PC-3 (cell line): ENCODE measurements at regions of chr2 and their contacts with region 1.

Region 1: GRCh38 chr2:172084734-172085459 is 410 bp upstream of the DLX1 start:
- DNase-seq: peak; percentile 96
- ATAC-seq: peak; percentile 90
- H3K4me3 ChIP-seq: peak overlapping the region; percentile 94
- H3K27ac ChIP-seq: peak overlapping the region; percentile 60
- H3K4me1 ChIP-seq: peaks cover 16% of the 10 kb centered on the region; the same call in 1 of the 2 replicates
- H3K27me3 ChIP-seq: no peaks in the 10 kb centered on the region
- CTCF ChIP-seq: no peak

Region 2: DNA sequence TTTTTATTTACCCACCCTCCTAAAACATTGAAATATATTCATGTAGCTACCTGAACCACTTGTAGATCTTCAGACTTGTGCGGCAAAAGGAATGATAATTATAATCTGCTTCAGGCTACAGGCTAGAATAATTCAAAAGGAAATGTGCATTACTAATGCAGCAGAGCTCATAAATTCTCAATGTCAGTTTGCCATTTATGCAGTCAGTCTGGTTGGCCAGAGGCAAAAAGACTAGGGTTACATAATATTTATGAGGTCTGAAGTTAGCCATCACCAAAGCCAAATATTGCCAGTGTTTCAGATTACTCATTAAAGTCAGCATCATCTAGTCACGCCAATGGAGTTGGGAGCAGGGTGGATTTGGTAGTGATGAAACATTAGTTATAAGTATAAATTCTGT is 46.3 kb before region 1 on chr2:
- CTCF ChIA-PET with region 1: no interaction called
- POLR2A ChIA-PET with region 1: no interaction called
- intact Hi-C with region 1: loop called (anchors 2 kb)
- DNase-seq: peak; percentile 95
- ATAC-seq: peak; percentile 96
- H3K4me3 ChIP-seq: no peak overlapping the region
- H3K27ac ChIP-seq: peak overlapping the region; percentile 65
- H3K4me1 ChIP-seq: peaks cover 18% of the 10 kb centered on the region
- H3K27me3 ChIP-seq: no peaks in the 10 kb centered on the region
- CTCF ChIP-seq: no peak